ENCODE measurements at regions of chrX and their contacts with region 1.

Region 1: GRCh38 chrX:24190500-24191156 is 41.1 kb downstream of the ZFX start:
- H3K4me3 ChIP-seq: no peak overlapping the region
- H3K27ac ChIP-seq: no peak overlapping the region
- H3K4me1 ChIP-seq: peaks cover 15% of the 10 kb centered on the region
- CTCF ChIP-seq: no peak

Region 2: GRCh38 chrX:24204331-24204730 is 13.7 kb after region 1 on chrX:
- CTCF ChIA-PET with region 1: interaction called, 10 read pairs
- POLR2A ChIA-PET with region 1: interaction called, 3 read pairs
- H3K4me3 ChIP-seq: no peak overlapping the region
- H3K27ac ChIP-seq: no peak overlapping the region
- H3K4me1 ChIP-seq: no peaks in the 10 kb centered on the region; the same call in 1 of the 2 replicates
- CTCF ChIP-seq: no peak

Region 3: DNA sequence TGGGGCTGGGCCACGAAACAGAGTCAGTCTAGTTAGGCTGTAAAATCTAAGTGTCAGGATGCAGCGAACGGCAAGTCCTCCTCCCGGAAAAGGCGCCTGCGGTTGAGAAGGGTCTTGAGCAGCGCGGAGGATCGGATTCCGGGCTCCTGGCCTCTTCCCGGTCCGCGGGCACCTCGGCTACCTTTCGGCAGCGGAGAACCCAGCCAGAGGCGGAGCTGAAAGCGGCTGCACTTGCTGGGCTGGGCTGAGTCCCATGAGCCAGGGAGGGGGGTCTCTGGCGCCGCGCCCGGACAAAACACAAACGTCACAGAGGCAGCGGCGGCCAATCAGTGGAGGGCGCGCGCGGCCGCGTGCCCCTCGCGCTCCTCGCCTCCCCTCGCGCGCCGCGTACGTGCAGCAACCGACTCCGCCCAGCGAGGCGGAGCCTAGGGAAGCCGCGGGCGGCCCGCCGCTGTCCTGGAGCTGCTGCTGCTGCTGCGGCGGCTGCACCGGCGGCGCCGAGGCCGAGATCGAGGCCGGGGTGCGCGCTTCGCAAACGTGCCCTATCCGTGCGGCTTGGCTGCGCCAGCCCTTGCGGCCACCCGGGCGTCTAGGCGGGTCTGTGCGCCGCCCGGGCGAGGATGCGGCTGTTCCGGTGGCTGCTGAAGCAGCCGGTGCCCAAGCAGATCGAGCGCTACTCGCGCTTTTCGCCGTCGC is 274.4 kb after region 1 on chrX and contains the start of gene PDK3:
- CTCF ChIA-PET with region 1: no interaction called
- POLR2A ChIA-PET with region 1: no interaction called
- H3K4me3 ChIP-seq: peak within 1 kb of the TSS; percentile 68
- H3K27ac ChIP-seq: peak within 1 kb of the TSS; percentile 83
- H3K4me1 ChIP-seq: peaks cover 11% of the 10 kb centered on the region; the same call in 1 of the 2 replicates
- CTCF ChIP-seq: no peak